ENCODE measurements at regions of chr14 and their contacts with region 1.

Region 1: DNA sequence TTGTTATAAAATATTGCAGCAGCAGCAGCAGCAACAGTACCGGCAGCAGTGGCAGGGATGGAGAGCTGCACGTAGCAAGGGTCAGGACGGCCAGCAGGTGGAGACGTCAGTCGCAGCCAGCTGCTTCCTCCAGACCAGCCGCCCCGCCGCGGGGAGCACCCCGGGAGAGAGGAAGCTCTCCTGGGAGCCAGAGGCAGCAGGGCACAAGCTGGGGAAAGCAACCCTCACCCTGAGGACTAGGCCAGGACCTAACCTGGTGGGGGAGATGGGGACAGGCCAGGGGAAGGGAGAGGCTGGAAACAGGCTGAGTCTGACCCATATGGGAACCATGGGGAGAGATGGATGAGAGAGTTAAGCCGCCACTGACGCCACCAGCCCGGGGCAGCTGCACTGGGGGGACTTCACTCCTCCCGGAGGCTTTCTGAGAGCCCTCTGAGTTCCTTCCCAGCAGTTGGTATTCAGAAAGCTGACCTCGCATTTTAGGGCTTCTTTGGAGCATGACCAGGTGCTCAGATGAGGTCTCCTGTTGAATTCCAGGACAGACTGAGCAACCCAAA is 56.3 kb downstream of the SPTB start:
- DNase-seq: peak; percentile 65 to 84
- H3K4me3 ChIP-seq: no peak overlapping the region
- H3K27ac ChIP-seq: no peak overlapping the region
- H3K4me1 ChIP-seq: peaks cover 0 to 10% (median 7%) of the 10 kb centered on the region in 4 donors
- H3K27me3 ChIP-seq: peaks cover 0 to 9% of the 10 kb centered on the region in 2 donors
- CTCF ChIP-seq: peak; percentile 77 to 87

Region 2: GRCh38 chr14:64891839-64892375 is 68.5 kb after region 1 on chr14:
- intact Hi-C with region 1: loop called (anchors 5 kb)
- DNase-seq: no peak
- H3K4me3 ChIP-seq: no peak overlapping the region
- H3K27ac ChIP-seq: no peak overlapping the region
- H3K4me1 ChIP-seq: no peaks in the 10 kb centered on the region
- H3K27me3 ChIP-seq: peaks cover 0 to 5% of the 10 kb centered on the region in 2 donors
- CTCF ChIP-seq: peak; percentile 62 to 80

Region 3: DNA sequence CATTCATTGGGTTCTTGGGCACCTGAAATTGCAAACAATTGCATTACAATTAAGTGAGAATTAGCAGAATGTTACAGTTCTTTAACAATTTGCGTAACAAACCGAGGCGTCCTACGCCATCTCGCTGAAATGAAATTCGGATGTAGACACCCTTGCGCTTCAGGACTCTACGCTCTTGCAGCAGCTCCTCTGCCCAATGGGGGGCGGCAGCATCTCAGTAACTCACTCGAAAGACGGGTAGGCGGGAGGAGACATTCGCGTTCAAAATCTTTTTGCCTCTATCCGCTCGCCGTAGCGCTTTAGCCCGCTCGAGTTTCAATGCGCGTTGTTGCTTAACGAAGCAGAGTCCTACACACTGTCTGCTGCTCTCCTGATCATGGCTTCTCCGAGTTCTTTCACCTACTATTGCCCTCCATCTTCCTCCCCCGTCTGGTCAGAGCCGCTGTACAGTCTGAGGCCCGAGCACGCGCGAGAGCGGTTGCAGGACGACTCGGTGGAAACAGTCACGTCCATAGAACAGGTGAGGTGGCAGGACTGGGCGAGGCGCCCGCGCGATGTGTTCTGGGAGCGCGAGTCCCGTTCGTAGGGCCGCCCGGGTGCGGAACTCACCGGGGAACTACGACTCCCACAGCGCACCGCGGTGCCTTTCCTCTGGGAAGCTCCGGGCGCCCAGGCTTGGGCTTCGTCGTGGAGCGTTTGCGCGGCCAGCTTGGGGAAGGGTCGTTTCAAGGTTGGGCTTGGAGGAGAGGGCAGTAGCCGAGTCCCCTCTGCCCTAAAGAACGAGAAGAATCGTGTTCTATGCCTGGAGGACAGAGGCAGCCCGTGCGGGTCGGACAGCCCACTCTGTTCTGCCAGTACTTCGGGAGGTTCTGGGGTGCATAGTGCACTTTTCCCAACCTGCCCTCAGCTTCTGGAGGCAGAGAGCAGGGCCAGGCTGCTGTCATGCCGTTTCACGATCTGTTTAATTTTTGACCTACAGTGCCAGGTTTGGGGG is 163.5 kb after region 1 on chr14 and contains the start of gene FNTB:
- intact Hi-C with region 1: loop called (anchors 5 kb)
- DNase-seq: peak; percentile 95 to 97
- H3K4me3 ChIP-seq: peak within 1 kb of the TSS; percentile 68 to 72
- H3K27ac ChIP-seq: peak within 1 kb of the TSS; percentile 83 to 89
- H3K4me1 ChIP-seq: peaks cover 0 to 15% (median 11%) of the 10 kb centered on the region in 4 donors
- H3K27me3 ChIP-seq: no peaks in the 10 kb centered on the region
- CTCF ChIP-seq: peak; percentile 61 to 79

Region 4: GRCh38 chr14:65790172-65790815 is 966.9 kb after region 1 on chr14:
- intact Hi-C with region 1: no loop called
- DNase-seq: no peak
- H3K4me3 ChIP-seq: no peak overlapping the region
- H3K27ac ChIP-seq: no peak overlapping the region
- H3K4me1 ChIP-seq: no peaks in the 10 kb centered on the region
- H3K27me3 ChIP-seq: no peaks in the 10 kb centered on the region
- CTCF ChIP-seq: no peak

Measured in tibial artery (tissue), 4 donors.